Activated T-helper 1 cell treated with anti-CD3 and anti-CD28 coated beads, Interleukin-12 subunit alpha, Interleukin-12 subunit beta, Interleukin-2, Interleukin-4 antibody, amounts not matched to agents 30 ng/mL and 10 ng/mL and 1 ng/mL, durations not matched to agents 14 hours and 24 hours and 36 hours (primary cell): ENCODE measurements at regions of chr4 and their contacts with region 1.

Region 1: GRCh38 chr4:112099701-112100297 is 45.5 kb upstream of the FAM241A start:
- DNase-seq: no peak
- H3K4me3 Mint-ChIP-seq: no peak overlapping the region
- H3K27ac Mint-ChIP-seq: no peak overlapping the region
- H3K4me1 Mint-ChIP-seq: peaks cover 20% of the 10 kb centered on the region
- H3K27me3 Mint-ChIP-seq: peaks cover 22% of the 10 kb centered on the region

Region 2: GRCh38 chr4:111678479-111678878 is 421.3 kb before region 1 on chr4:
- intact Hi-C with region 1: no loop called
- DNase-seq: no peak
- H3K4me3 Mint-ChIP-seq: no peak overlapping the region
- H3K27ac Mint-ChIP-seq: no peak overlapping the region
- H3K4me1 Mint-ChIP-seq: no peaks in the 10 kb centered on the region
- H3K27me3 Mint-ChIP-seq: no peaks in the 10 kb centered on the region

Region 3: GRCh38 chr4:112266821-112267220 is 167.0 kb after region 1 on chr4:
- intact Hi-C with region 1: loop called (anchors 1 kb)
- DNase-seq: no peak
- H3K4me3 Mint-ChIP-seq: no peak overlapping the region
- H3K27ac Mint-ChIP-seq: no peak overlapping the region
- H3K4me1 Mint-ChIP-seq: peaks cover 14% of the 10 kb centered on the region
- H3K27me3 Mint-ChIP-seq: no peaks in the 10 kb centered on the region

Region 4: DNA sequence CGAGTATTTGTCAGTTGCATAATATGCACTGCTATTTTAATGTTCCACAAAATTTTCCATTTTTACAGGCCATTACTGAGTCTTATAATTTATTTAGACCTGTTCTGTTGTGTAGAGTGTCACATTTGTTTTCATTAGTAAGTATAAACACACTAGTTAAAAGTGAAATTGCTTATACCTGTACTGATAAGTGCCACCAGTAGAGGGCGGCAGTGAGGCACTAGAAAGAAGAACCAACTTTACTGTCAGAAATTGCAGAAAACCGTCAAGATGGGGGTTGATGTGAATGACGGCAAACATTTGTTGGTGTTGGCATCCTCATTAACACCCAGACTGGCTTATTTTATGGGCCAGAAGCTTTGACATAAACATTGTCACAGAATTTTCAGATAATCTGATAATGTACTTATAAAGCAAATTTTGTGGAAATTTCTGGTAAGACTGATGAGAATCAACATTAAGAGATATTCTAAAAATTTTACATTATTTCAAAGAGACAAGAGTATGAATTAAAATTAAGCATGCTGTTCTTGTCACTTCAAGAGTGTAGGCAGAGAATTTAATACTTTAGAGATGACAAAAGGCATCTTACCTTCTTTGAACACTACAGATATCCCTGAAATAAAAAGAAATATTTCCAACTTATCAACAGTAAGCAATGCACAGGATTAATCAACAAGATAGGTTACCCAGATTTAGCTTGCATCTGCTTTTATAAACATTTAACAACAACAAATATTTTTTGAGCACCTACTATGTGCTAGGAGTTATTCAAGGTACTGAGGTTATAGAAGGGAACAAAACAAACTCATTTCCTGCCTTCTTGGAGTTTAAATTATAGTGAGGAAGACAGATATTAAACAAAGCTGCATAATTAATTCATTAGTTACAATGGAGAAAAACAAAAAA is 222.2 kb after region 1 on chr4:
- intact Hi-C with region 1: loop called (anchors 5 kb)
- DNase-seq: peak; percentile 64
- H3K4me3 Mint-ChIP-seq: no peak overlapping the region
- H3K27ac Mint-ChIP-seq: no peak overlapping the region
- H3K4me1 Mint-ChIP-seq: peaks cover 52% of the 10 kb centered on the region
- H3K27me3 Mint-ChIP-seq: no peaks in the 10 kb centered on the region